ENCODE measurements at regions of chr20 and their contacts with region 1.

Region 1: GRCh38 chr20:21693322-21693721 is 12.1 kb upstream of the PAX1 start:
- DNase-seq: peak in 1 of 2 experiments; percentile 79
- H3K4me3 ChIP-seq: no peak overlapping the region
- H3K27ac ChIP-seq: no peak overlapping the region
- H3K4me1 ChIP-seq: peaks cover 0 to under 1% (median under 1%) of the 10 kb centered on the region in 4 experiments; a peak in 3 of 7 replicates
- H3K27me3 ChIP-seq: peaks cover 13 to 43% (median 32%) of the 10 kb centered on the region in 4 experiments
- CTCF ChIP-seq: peak; percentile 69 to 78 (median 71)
- EP300 ChIP-seq: no peak
- POLR2A ChIP-seq: no peak
- RAD21 ChIP-seq: peak; percentile 63 to 69

Region 2: DNA sequence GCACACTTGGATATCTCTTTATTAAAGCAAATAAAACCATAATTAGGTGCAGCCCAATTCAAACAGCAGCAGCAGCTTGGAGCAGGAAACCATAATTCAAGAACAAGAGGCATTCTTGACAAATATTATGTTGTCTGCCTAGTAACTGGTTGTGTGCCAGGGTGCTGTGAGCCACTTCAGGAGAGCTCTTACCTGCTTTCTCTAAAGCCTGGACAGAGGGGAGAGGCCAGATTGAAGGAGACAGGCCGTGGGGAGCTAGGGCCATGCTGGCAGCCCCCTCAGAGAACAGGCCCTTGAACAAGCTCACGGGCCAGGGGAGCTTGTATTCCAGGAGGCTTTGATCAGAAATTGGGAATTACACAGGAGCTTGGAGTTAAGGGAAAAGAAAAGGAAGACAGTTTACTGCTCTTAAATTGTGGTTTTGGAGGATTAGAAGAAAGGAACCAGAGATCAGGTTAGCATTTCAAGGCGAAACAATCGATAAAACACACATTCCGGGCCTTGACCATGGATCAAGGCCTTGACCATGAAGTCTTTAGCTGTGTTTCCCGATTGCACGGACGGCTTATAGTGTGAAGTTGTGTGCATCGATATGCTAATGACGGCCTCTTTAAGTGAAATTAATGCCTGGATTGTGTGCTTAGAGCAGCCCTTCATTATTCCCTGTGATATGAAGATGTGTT is 109.7 kb before region 1 on chr20:
- CTCF ChIA-PET with region 1: no interaction called
- POLR2A ChIA-PET with region 1: no interaction called
- DNase-seq: no peak
- H3K4me3 ChIP-seq: no peak overlapping the region
- H3K27ac ChIP-seq: no peak overlapping the region
- H3K4me1 ChIP-seq: no peaks in the 10 kb centered on the region
- H3K27me3 ChIP-seq: peaks cover 0 to 1% (median 0%) of the 10 kb centered on the region in 4 experiments; a peak in 1 of 7 replicates
- CTCF ChIP-seq: no peak
- EP300 ChIP-seq: no peak
- POLR2A ChIP-seq: no peak
- RAD21 ChIP-seq: no peak

Region 3: DNA sequence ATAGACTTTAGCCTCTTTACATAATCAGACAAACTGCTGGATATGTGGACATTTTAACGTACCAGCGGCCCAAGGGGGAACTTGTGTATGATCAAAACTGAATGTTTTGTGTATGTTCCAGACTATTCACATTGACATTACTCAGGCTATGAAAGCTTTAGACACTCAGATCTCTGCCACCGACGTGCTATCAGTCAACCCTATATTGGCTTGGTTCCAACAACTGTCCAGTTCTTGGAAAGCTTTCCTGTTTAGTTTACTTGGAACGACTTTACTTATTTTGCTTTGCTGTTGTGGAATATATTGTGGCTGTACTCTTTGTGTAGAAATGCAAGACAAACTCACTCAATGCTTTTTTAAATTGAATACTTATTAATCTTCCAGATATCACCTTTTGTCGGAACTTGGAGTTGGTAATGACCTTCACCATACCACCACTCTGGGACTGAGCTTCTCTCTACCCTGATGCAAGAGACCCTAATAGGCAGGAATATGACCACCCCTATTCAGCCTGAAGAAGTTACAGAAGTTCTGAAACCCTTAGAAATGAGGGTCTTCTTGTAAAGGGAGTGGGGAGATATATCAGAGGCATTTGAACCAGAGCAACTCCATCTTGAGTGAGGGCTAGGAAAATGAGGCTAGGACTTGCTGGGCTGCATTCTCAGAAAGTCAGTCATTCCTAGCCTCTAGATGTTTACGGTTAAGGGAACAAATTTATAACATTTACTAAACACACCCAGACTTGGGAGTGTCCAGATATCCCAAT is 36.8 kb before region 1 on chr20:
- CTCF ChIA-PET with region 1: interaction called, 14 read pairs
- POLR2A ChIA-PET with region 1: no interaction called
- DNase-seq: no peak
- H3K4me3 ChIP-seq: no peak overlapping the region
- H3K27ac ChIP-seq: no peak overlapping the region
- H3K4me1 ChIP-seq: no peaks in the 10 kb centered on the region
- H3K27me3 ChIP-seq: no peaks in the 10 kb centered on the region
- CTCF ChIP-seq: no peak
- EP300 ChIP-seq: no peak
- POLR2A ChIP-seq: no peak
- RAD21 ChIP-seq: no peak

Region 4: GRCh38 chr20:21682521-21682954 is 10.8 kb before region 1 on chr20:
- CTCF ChIA-PET with region 1: interaction called, 22 read pairs
- POLR2A ChIA-PET with region 1: no interaction called
- DNase-seq: no peak
- H3K4me3 ChIP-seq: no peak overlapping the region
- H3K27ac ChIP-seq: no peak overlapping the region
- H3K4me1 ChIP-seq: no peaks in the 10 kb centered on the region
- H3K27me3 ChIP-seq: no peaks in the 10 kb centered on the region
- CTCF ChIP-seq: no peak
- EP300 ChIP-seq: no peak
- POLR2A ChIP-seq: no peak
- RAD21 ChIP-seq: no peak